CD8-positive, alpha-beta T cell (primary cell): ENCODE measurements at regions of chr4 and their contacts with region 1.

Region 1: GRCh38 chr4:107989537-107990386 is at the start of gene HADH:
- DNase-seq: peak; percentile 87 to 97 (median 94)
- ATAC-seq: peak; percentile 99
- H3K4me3 ChIP-seq: peak within 1 kb of the TSS; percentile 65 to 75
- H3K4me3 Mint-ChIP-seq: peak within 1 kb of the TSS; percentile 96
- H3K27ac ChIP-seq: peak within 1 kb of the TSS; percentile 70 to 74
- H3K27ac Mint-ChIP-seq: peak within 1 kb of the TSS; percentile 95
- H3K4me1 ChIP-seq: peaks cover 28% of the 10 kb centered on the region
- H3K4me1 Mint-ChIP-seq: peaks cover 60% of the 10 kb centered on the region
- H3K27me3 ChIP-seq: no peaks in the 10 kb centered on the region
- H3K27me3 Mint-ChIP-seq: no peaks in the 10 kb centered on the region
- CTCF ChIP-seq: no peak
- total RNA-seq, gene HADH: 9.6 to 10.9 TPM

Region 2: GRCh38 chr4:107666134-107666533 is 323.6 kb before region 1 on chr4:
- CTCF ChIA-PET with region 1: no interaction called
- POLR2A ChIA-PET with region 1: no interaction called
- intact Hi-C with region 1: no loop called
- DNase-seq: no peak
- ATAC-seq: no peak
- H3K4me3 ChIP-seq: no peak overlapping the region
- H3K4me3 Mint-ChIP-seq: no peak overlapping the region
- H3K27ac ChIP-seq: no peak overlapping the region
- H3K27ac Mint-ChIP-seq: no peak overlapping the region
- H3K4me1 ChIP-seq: no peaks in the 10 kb centered on the region
- H3K4me1 Mint-ChIP-seq: no peaks in the 10 kb centered on the region
- H3K27me3 ChIP-seq: no peaks in the 10 kb centered on the region
- H3K27me3 Mint-ChIP-seq: no peaks in the 10 kb centered on the region
- CTCF ChIP-seq: no peak

Region 3: DNA sequence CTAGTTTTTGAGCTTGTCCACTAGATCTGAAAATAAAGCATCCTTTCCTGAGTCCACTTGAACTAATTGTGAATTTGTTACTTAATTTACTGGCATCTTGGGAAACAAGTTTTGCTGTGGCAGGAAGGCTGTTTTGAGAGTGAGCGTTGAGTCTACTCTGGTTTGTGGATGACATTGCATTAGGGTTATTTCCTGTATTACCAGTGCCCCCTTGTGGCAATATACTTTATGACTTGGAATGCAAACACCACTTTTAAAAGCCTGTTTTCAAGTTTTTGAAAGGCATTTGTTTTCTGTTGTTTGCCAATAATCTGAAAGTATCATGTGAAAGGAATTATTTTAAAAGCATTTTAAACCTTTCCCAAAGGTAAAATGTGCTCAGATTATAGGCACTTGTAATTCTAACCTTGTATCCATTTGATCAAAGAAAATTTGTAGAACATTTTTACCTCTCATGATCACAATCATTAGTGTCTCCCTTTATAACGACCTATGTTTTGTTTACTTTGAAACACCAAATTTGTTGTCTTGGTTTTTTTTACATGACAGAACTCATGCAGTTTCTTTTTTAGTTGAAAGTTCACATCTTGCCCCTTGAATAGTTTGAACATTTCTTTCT is 76.4 kb before region 1 on chr4:
- CTCF ChIA-PET with region 1: no interaction called
- POLR2A ChIA-PET with region 1: no interaction called
- intact Hi-C with region 1: loop called in 1 of 2 experiments (anchors 1 kb)
- DNase-seq: peak in 6 of 9 experiments; percentile 4 to 76 (median 30)
- ATAC-seq: peak; percentile 84
- H3K4me3 ChIP-seq: no peak overlapping the region
- H3K4me3 Mint-ChIP-seq: no peak overlapping the region
- H3K27ac ChIP-seq: no peak overlapping the region
- H3K27ac Mint-ChIP-seq: no peak overlapping the region
- H3K4me1 ChIP-seq: no peaks in the 10 kb centered on the region
- H3K4me1 Mint-ChIP-seq: peaks cover 2% of the 10 kb centered on the region
- H3K27me3 ChIP-seq: no peaks in the 10 kb centered on the region
- H3K27me3 Mint-ChIP-seq: no peaks in the 10 kb centered on the region
- CTCF ChIP-seq: peak; percentile 79

Region 4: DNA sequence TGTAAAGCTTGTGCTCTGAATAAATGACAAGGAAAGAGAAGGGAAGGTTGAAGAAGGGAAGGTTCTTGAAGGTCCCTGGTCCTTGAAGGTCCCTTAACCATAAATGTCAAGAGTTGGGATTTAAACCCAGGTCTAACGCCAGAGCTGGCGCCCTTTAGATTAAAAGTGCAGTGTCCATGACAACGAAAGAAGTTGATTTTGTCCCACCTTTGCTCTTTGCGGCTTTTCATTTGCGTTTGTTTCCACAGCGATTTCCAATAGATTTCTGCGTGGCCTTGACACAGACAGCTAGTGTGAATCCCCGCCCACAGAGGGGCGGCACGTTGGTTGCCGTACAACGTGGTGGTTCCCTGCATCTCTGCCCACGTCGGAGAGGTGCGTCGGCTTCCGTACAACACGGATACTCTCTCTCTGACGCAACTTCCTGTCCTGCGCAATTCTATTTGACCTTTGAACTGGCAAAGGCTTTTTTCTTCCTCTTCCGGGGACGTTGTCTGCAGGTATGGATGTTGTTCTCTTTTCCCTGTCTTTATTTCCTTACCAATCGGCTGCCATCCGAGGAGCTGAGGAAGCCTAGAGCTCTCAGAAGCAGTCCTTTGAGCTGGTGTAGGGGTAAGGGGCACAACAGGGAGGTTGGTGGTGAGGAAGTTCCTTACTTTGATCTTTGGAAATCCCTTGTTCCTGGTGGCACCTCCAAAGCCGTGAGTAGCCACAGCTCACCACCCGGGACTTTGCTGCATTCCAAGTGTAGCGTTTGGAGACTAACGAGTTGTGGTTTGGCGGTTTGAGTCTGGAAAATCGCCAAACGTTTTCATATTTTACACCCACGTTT is 630.6 kb after region 1 on chr4 and contains the start of gene RPL34:
- CTCF ChIA-PET with region 1: no interaction called
- POLR2A ChIA-PET with region 1: no interaction called
- intact Hi-C with region 1: loop called in 1 of 2 experiments (anchors 1 kb)
- DNase-seq: peak; percentile 94 to 100 (median 97)
- ATAC-seq: peak; percentile 98
- H3K4me3 ChIP-seq: peak within 1 kb of the TSS; percentile 92 to 97
- H3K4me3 Mint-ChIP-seq: peak within 1 kb of the TSS; percentile 93
- H3K27ac ChIP-seq: peak within 1 kb of the TSS; percentile 85 to 90
- H3K27ac Mint-ChIP-seq: peak within 1 kb of the TSS; percentile 96
- H3K4me1 ChIP-seq: peaks cover 50% of the 10 kb centered on the region
- H3K4me1 Mint-ChIP-seq: peaks cover 58% of the 10 kb centered on the region
- H3K27me3 ChIP-seq: no peaks in the 10 kb centered on the region
- H3K27me3 Mint-ChIP-seq: no peaks in the 10 kb centered on the region
- CTCF ChIP-seq: no peak
- total RNA-seq, gene RPL34: 3,253 to 3,442 TPM

Region 5: DNA sequence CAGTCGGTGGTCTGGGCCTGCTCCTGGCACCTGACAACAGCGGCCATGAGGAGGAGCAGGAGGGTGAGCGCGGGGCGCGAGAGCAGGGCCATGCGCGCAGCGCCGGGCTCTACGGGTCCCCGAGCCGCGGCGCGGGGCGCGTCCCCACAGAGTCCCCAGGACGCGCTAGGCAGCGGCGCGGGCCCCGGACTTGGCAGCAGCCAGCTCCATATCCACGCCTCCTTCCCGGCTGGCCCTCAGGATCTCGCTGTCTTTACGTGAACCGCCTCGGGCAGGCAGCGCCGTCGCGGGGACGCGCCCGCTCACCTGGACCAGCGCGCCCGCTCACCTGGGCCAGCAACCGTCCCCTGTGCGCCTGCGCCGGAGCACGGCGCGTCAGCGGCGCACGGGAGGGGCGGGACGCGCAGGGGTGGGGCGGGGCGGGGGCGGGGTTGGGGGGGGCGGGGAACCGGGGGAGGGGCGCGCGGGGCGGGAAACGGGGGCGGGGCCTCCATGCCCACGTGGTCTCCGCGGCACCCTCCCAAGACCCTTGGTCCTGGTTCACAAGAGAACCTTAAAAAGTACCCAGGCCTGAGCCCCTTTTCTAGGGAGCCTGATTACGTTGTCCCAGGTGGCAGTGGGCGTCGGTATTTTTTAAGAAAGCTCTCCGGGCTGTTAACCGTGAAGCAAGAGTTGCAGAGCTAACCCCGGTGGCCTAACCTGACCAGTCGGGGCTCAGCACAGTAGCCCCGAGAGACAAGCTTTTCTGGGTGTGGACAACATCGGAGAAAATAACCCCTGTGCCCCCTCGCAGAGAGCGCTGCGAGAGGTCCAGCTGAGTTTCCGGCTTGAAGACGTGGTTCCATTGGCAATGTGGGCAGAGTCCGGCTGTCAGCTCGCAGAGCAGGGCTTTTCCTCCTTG is 1740.2 kb after region 1 on chr4 and contains the start of gene PLA2G12A:
- CTCF ChIA-PET with region 1: no interaction called
- POLR2A ChIA-PET with region 1: no interaction called
- intact Hi-C with region 1: loop called in 1 of 2 experiments (anchors 5 kb)
- DNase-seq: peak; percentile 65 to 91 (median 81)
- ATAC-seq: peak; percentile 93
- H3K4me3 ChIP-seq: peak within 1 kb of the TSS; percentile 89 to 92
- H3K4me3 Mint-ChIP-seq: peak within 1 kb of the TSS; percentile 90
- H3K27ac ChIP-seq: peak within 1 kb of the TSS; percentile 69 to 78
- H3K27ac Mint-ChIP-seq: peak within 1 kb of the TSS; percentile 90
- H3K4me1 ChIP-seq: peaks cover 17% of the 10 kb centered on the region
- H3K4me1 Mint-ChIP-seq: peaks cover 27% of the 10 kb centered on the region
- H3K27me3 ChIP-seq: no peaks in the 10 kb centered on the region
- H3K27me3 Mint-ChIP-seq: no peaks in the 10 kb centered on the region
- CTCF ChIP-seq: no peak
- total RNA-seq, gene PLA2G12A: 7.8 to 10.2 TPM